Adrenal gland (tissue), 19 donors: ENCODE measurements at regions of chr1 and their contacts with region 1.

Region 1: GRCh38 chr1:110455151-110455550 is 4.2 kb downstream of the PROK1 start:
- DNase-seq: no peak
- H3K4me3 ChIP-seq: no peak overlapping the region
- H3K27ac ChIP-seq: no peak overlapping the region
- H3K4me1 ChIP-seq: no peaks in the 10 kb centered on the region
- H3K27me3 ChIP-seq: no peaks in the 10 kb centered on the region
- CTCF ChIP-seq: no peak
- POLR2A ChIP-seq: no peak

Region 2: DNA sequence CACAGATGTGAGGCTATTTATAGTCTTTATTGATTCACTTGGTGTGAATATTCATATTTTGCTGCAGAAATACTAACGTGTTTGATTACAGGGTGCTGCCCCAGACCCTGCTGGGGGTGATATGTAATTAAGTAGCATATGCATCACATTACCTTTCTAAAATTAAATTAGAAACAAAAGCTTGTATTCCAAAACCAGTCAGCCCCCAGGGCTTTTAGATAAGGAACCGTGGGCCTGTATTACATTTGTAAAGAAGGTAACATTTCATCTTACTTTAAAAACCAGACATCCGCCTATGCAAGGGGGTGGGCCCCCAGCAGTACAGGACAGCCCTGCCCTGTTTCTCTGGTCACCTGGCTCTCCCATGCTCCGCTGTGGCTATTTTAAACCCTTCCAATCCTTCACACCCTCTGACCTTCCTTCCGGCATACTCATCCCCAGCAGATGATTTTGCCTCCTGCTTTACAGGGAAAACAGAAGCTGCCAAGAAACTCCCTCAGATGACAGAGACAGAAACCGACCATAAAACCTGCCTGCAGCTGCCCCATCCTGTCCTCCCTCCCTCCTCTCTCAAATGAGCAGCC is 267.0 kb before region 1 on chr1:
- intact Hi-C with region 1: no loop called
- DNase-seq: peak in 5 of 7 donors; percentile 55 to 76 (median 71)
- H3K4me3 ChIP-seq: no peak overlapping the region
- H3K27ac ChIP-seq: peak overlapping the region in 2 of 5 donors; percentile 27 to 60
- H3K4me1 ChIP-seq: peaks cover 0 to 18% of the 10 kb centered on the region in 2 donors
- H3K27me3 ChIP-seq: peaks cover 6% of the 10 kb centered on the region
- CTCF ChIP-seq: no peak
- POLR2A ChIP-seq: no peak

Region 3: GRCh38 chr1:110420874-110421793 is 34.0 kb before region 1 on chr1:
- intact Hi-C with region 1: loop called in 1 of 2 experiments (anchors 5 kb)
- DNase-seq: peak in 5 of 7 donors; percentile 45 to 65 (median 61)
- H3K4me3 ChIP-seq: no peak overlapping the region
- H3K27ac ChIP-seq: peak overlapping the region in 1 of 5 donors; percentile 68
- H3K4me1 ChIP-seq: peaks cover 0 to 7% of the 10 kb centered on the region in 2 donors
- H3K27me3 ChIP-seq: no peaks in the 10 kb centered on the region
- CTCF ChIP-seq: no peak
- POLR2A ChIP-seq: no peak